ENCODE measurements at regions of chr14 and their contacts with region 1.

Region 1: DNA sequence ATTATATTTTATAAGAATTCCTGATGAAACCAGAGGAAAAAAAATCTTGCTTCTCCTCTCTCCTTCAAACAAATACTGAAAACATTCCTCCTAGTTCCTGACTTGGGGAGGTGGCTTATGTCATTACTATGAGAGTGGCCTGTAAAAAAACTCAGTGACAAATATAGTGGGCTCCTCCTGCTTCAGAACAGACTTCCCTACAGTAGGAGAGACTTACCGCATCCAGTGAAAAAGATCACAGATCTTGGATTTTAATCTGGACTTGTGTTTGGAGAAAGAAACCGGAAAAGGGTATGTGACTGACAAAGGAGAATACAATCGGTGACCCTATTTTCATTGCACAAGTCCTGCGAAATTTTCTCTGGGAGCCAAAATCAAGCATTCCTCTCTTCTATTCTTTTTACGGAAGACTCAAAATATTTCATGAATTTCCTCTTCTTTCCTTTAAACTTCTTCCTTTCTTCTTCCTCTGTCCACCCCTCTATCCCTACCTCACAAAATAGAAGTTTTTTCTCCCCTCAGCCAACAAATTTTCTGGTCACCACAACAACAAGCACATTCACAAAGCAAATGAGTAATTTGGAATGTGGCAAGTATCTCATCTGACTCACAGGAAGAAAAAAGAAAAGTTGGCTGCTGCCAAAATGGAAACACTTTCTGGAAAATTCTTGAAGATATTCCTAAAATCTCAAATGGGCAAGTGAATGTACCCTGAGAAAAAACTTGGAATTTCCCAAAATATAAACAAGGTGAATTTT is 185.1 kb upstream of the CDKN3 start:
- DNase-seq: peak; percentile 99
- ATAC-seq: peak; percentile 89
- H3K4me3 ChIP-seq: peak overlapping the region; percentile 25
- H3K27ac ChIP-seq: peak overlapping the region; percentile 84
- H3K4me1 ChIP-seq: peaks cover 36% of the 10 kb centered on the region
- H3K27me3 ChIP-seq: no peaks in the 10 kb centered on the region
- CTCF ChIP-seq: no peak

Region 2: DNA sequence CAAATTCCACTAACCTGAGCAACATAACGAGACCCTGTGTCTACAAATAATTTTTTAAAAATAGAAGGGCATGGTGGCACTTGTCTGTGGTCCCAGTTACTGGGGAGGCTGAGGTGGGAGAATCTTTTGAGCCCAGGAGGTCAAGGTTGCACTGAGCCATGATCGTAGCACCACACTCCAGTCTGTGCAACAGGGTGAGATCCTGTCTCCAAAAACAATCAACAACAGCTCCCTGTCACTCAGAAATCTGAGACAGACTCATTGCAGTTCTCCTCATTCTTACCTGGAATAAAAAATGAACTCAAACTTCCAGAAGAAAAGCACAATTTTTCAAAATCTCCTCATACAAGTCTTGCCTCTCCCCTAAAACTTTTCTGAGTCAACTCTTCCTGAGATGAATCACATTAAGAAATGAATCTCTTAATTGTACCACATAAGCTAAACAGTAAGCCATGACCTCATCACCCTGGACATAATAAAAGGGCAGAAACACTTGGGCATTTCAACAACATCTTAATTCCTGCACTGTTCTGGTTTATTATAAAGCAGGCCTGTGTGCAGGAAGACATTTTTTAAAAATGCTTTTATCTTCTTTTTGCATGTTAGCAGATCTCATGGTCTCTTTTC is 29.2 kb before region 1 on chr14:
- CTCF ChIA-PET with region 1: no interaction called
- POLR2A ChIA-PET with region 1: no interaction called
- intact Hi-C with region 1: loop called (anchors 2 kb)
- DNase-seq: peak; percentile 96
- ATAC-seq: peak; percentile 82
- H3K4me3 ChIP-seq: no peak overlapping the region
- H3K27ac ChIP-seq: peak overlapping the region; percentile 73
- H3K4me1 ChIP-seq: peaks cover 27% of the 10 kb centered on the region
- H3K27me3 ChIP-seq: no peaks in the 10 kb centered on the region
- CTCF ChIP-seq: no peak

Region 3: GRCh38 chr14:54226103-54226502 is 14.4 kb after region 1 on chr14:
- CTCF ChIA-PET with region 1: no interaction called
- POLR2A ChIA-PET with region 1: no interaction called
- intact Hi-C with region 1: no loop called
- DNase-seq: no peak
- ATAC-seq: no peak
- H3K4me3 ChIP-seq: no peak overlapping the region
- H3K27ac ChIP-seq: no peak overlapping the region
- H3K4me1 ChIP-seq: no peaks in the 10 kb centered on the region
- H3K27me3 ChIP-seq: no peaks in the 10 kb centered on the region
- CTCF ChIP-seq: no peak

Region 4: DNA sequence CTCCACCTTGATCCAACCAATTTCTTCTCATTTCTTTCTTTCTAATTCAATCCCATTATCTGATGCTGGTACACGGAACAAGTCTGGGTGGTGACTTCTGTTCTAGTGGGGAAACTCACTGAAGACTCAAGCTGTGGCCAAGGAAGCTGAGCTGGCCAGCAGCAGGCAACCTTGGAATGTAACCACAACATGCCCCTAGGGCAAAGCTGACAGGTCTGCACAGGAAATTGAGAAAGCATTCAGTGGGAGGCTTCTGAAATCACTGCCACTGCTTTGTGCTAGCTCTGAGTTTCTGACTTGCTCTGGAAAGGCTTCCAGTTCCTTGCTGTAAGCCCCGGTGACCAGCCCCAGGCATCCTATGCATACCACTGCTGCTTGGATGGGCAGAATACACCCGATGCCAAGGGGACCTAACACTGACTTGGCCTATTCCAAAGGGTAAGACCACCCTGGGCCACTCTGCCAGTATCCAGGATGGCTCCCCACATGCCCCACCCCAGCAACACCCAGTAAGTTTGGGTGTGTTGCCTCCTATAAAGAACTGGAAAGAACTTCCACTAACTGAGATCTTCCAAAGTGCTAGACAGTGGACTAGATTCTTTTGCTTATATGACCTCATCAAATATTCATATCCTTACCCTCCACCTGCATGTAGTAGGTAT is 100.5 kb after region 1 on chr14:
- CTCF ChIA-PET with region 1: no interaction called
- POLR2A ChIA-PET with region 1: no interaction called
- intact Hi-C with region 1: loop called (anchors 1 kb)
- DNase-seq: peak; percentile 100
- ATAC-seq: peak; percentile 93
- H3K4me3 ChIP-seq: peak overlapping the region; percentile 3; the same call in 1 of the 2 replicates
- H3K27ac ChIP-seq: peak overlapping the region; percentile 66
- H3K4me1 ChIP-seq: peaks cover 53% of the 10 kb centered on the region
- H3K27me3 ChIP-seq: no peaks in the 10 kb centered on the region
- CTCF ChIP-seq: no peak

Region 5: DNA sequence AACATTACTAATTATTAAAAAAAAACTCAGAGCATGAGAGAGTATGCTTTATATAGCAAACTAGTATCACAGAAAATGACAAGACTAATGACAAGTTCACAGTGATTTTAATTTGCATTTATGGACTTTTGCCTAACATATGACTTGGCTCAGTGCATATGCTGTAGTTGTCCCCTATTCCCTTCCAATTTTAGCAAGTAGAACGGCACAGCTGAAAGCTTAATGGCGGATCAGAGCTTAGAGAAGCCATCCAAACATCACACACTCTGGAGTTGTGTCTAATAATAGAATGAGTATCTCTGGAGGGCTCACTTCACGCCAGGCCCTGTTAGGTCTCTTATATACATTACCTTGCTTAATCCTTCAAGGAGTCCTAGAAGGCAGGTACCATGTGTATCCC is 216.1 kb after region 1 on chr14:
- CTCF ChIA-PET with region 1: no interaction called
- POLR2A ChIA-PET with region 1: no interaction called
- intact Hi-C with region 1: no loop called
- DNase-seq: no peak
- ATAC-seq: no peak
- H3K4me3 ChIP-seq: no peak overlapping the region
- H3K27ac ChIP-seq: no peak overlapping the region
- H3K4me1 ChIP-seq: no peaks in the 10 kb centered on the region
- H3K27me3 ChIP-seq: no peaks in the 10 kb centered on the region
- CTCF ChIP-seq: no peak

Measured in PC-3 (cell line).